Dorsolateral prefrontal cortex (tissue), 120 donors: ENCODE measurements at regions of chr17 and their contacts with region 1.

Region 1: GRCh38 chr17:49290690-49291359 is 60.2 kb upstream of the PHOSPHO1 start:
- DNase-seq: no peak
- H3K4me3 ChIP-seq: no peak overlapping the region
- H3K27ac ChIP-seq: peak overlapping the region in 8 of 59 donors; percentile 5 to 48 (median 26)
- H3K27me3 ChIP-seq: no peaks in the 10 kb centered on the region
- CTCF ChIP-seq: peak; percentile 43 to 84 (median 70)

Region 2: DNA sequence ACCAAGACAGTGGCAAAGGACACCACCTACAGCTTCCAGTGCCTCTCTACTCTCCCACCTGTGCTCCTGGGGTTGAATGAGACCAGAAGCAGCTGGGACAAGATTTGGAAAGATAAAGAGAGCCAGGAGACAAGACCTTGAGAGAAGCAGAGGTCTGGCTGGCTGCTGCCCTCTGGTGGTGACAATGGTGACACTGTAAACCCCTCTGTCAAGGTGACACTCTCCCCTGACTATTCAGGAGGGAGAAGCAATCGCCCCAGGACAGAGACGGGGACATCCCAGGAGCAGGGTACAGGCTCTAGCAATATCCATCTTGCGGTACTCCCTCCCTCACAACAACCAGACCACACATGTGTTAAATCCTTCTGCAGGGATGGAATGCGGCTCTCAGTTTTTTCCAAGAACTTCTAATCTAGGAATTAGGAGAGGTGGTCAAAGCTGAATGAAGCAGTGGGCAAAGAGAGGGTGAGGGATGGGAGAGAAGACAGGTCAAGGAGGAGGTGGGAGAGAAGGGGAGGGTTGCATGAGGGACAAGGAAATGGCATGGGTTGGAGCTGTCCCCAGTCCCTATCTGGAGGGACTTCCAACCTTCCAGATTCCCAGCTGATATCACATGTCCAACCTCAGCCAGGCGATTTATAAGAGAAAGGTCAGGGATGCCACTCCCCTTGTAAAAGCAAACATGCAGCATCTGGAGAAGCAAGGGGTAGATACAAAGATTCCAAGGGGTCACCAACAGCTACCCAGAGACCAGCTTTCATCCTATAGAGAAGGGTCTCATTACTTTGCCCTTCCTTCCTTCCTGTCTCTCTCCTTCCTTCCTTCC is 63.2 kb before region 1 on chr17:
- intact Hi-C with region 1: loop called in 1 of 2 experiments (anchors 5 kb)
- DNase-seq: peak in 9 of 10 donors; percentile 49 to 84 (median 76)
- H3K4me3 ChIP-seq: no peak overlapping the region
- H3K27ac ChIP-seq: no peak overlapping the region
- H3K27me3 ChIP-seq: peaks cover 0 to 32% (median 20%) of the 10 kb centered on the region in 45 donors
- CTCF ChIP-seq: peak; percentile 59 to 90 (median 81)

Region 3: GRCh38 chr17:49353607-49354006 is 62.8 kb after region 1 on chr17:
- intact Hi-C with region 1: no loop called
- DNase-seq: no peak
- H3K4me3 ChIP-seq: no peak overlapping the region
- H3K27ac ChIP-seq: peak overlapping the region in 1 of 59 donors; percentile 20
- H3K27me3 ChIP-seq: no peaks in the 10 kb centered on the region
- CTCF ChIP-seq: no peak

Region 4: GRCh38 chr17:49496183-49496866 is 205.5 kb after region 1 on chr17:
- intact Hi-C with region 1: no loop called
- DNase-seq: peak; percentile 49 to 85 (median 69)
- H3K4me3 ChIP-seq: peak overlapping the region; percentile 29 to 77 (median 61)
- H3K27ac ChIP-seq: no peak overlapping the region
- H3K27me3 ChIP-seq: peaks cover 0 to 66% (median 49%) of the 10 kb centered on the region in 45 donors
- CTCF ChIP-seq: peak; percentile 28 to 95 (median 84)